ENCODE measurements at regions of chr4 and their contacts with region 1.

Region 1: DNA sequence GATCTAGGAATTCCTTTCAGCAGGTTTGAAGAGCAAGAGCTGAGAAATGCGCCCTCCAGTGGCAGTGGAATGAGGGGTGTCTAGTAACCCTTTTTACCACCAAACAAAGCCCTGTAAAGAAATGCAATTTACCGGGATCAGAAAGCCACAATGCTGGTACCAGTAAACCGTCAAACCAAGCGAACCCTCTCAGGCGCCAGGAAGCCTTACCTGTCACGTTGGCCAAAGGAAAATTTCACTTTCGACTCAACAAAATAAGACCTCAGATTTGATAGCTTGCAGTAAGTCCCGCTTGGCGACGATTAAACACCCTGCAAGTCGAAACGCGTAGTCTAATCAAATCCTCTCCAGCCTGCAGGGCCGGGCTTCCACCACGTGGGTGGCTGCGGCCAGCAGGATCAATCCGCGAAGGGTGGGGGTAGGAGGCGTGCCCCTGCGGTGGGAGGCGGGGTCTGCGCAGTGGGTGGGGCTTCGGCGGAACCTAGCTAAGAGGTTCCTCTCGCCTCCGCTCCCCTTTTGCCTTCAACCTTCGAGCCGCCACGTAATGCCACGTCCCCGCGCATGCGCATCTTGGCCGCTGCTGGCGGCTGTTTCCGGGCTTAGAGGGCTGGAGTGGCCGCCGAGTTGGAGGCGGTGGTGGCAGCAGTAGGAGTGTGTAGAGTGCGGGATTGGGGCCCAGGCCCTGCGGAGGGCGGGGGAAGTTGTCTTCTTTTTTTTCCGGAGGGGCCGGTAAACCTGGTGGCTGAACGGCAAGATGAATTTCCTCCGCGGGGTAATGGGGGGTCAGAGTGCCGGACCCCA is at the start of gene USO1:
- DNase-seq: peak; percentile 97 to 100 (median 99)
- ATAC-seq: peak; percentile 90 to 97 (median 94)
- H3K4me3 ChIP-seq: peak within 1 kb of the TSS; percentile 99 to 100
- H3K4me3 Mint-ChIP-seq: peak within 1 kb of the TSS; percentile 99 to 100 (median 99)
- H3K27ac ChIP-seq: peak within 1 kb of the TSS; percentile 94
- H3K27ac Mint-ChIP-seq: peak within 1 kb of the TSS; percentile 95 to 99
- H3K4me1 ChIP-seq: peaks cover 14 to 25% of the 10 kb centered on the region in 2 experiments
- H3K4me1 Mint-ChIP-seq: peaks cover 61 to 63% (median 62%) of the 10 kb centered on the region in 3 donors
- H3K27me3 ChIP-seq: no peaks in the 10 kb centered on the region
- H3K27me3 Mint-ChIP-seq: no peaks in the 10 kb centered on the region
- total RNA-seq, gene USO1: 24.9 to 40.5 (median 34.6) TPM

Region 2: DNA sequence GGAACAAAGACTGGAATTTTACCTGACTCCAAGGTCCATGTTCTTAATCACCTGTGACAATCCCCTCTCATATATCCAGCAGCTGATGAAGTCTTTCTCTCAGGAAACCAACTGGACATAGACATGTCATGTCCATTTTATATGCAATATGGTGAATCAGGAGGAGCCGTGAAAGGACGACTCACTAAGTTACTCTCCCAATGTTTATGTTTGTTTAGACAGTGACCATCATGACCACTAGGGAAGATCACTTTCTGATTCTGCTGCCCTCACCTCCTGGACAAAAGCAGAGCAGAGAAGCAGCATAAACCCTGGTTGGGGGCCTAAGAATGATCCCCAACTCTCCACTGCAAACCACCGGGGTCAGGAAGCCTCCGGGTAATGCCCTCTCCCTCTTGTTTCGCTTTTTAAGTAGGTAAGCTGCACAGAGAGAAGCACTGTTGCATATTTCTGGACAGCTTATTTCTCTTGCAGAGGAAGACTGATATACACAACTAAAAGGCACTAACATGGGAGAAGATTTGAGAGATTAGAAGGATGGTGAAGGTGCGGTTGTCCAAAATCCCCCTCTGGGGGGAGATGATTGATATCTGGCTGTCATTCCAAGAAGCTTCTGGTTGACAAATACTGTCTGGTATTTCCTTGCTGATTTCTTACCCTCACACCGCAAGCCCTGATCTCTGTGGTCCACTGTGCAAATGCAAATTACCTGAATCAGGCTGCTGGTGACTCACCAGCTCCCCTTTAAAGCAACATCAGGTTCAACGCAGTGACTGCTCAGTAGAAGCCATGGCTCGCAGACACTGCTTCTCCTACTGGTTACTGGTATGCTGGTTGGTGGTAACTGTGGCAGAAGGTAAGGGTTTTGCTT is 168.7 kb before region 1 on chr4 and contains the start of gene ODAPH:
- CTCF ChIA-PET with region 1: no interaction called
- POLR2A ChIA-PET with region 1: interaction called in 1 of 2 experiments, 19 read pairs
- DNase-seq: peak in 3 of 35 experiments; percentile 3 to 8 (median 4)
- ATAC-seq: peak in 3 of 4 experiments; percentile 58 to 84 (median 70)
- H3K4me3 ChIP-seq: no peak within 1 kb of the TSS
- H3K4me3 Mint-ChIP-seq: no peak within 1 kb of the TSS
- H3K27ac ChIP-seq: no peak within 1 kb of the TSS
- H3K27ac Mint-ChIP-seq: peak within 1 kb of the TSS in 1 of 2 donors; percentile 34
- H3K4me1 ChIP-seq: no peaks in the 10 kb centered on the region
- H3K4me1 Mint-ChIP-seq: peaks cover 0 to 5% (median 0%) of the 10 kb centered on the region in 3 donors
- H3K27me3 ChIP-seq: peaks cover 0 to 3% of the 10 kb centered on the region in 2 experiments
- H3K27me3 Mint-ChIP-seq: peaks cover 13% of the 10 kb centered on the region in 2 donors
- total RNA-seq, gene ODAPH: 0.47 TPM in 1 of 5 donors, not detected in the others

Region 3: DNA sequence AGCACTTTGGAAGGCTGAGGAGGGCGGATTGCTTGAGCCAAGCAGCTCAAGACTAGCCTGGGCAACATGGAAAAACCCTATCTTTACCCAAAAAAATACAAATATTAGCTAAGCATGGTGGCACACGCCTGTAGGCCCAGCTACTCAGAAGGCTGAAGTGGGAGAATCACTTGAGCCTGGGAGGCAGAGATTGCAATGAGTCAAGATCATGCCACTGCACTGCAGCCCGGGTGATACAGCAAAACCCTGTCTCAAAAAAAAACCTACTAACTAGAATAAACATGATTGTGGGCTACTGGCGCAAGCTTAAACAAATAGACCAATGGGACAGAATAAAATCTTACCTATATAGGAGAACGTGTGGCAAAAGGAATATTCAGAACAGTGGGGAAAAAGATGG is 101.2 kb before region 1 on chr4:
- CTCF ChIA-PET with region 1: no interaction called
- POLR2A ChIA-PET with region 1: no interaction called
- DNase-seq: no peak
- ATAC-seq: no peak
- H3K4me3 ChIP-seq: no peak overlapping the region
- H3K4me3 Mint-ChIP-seq: no peak overlapping the region
- H3K27ac ChIP-seq: no peak overlapping the region
- H3K27ac Mint-ChIP-seq: no peak overlapping the region
- H3K4me1 ChIP-seq: no peaks in the 10 kb centered on the region
- H3K4me1 Mint-ChIP-seq: no peaks in the 10 kb centered on the region
- H3K27me3 ChIP-seq: no peaks in the 10 kb centered on the region
- H3K27me3 Mint-ChIP-seq: no peaks in the 10 kb centered on the region

Region 4: GRCh38 chr4:75666299-75666698 is 58.0 kb before region 1 on chr4:
- CTCF ChIA-PET with region 1: interaction called, 10 to 17 read pairs
- POLR2A ChIA-PET with region 1: interaction called, 4 to 25 read pairs
- DNase-seq: no peak
- ATAC-seq: peak in 2 of 4 experiments; percentile 20 to 39
- H3K4me3 ChIP-seq: no peak overlapping the region
- H3K4me3 Mint-ChIP-seq: peak overlapping the region; percentile 62 to 100 (median 70)
- H3K27ac ChIP-seq: no peak overlapping the region
- H3K27ac Mint-ChIP-seq: peak overlapping the region; percentile 23 to 52
- H3K4me1 ChIP-seq: peaks cover 34 to 36% of the 10 kb centered on the region in 2 experiments
- H3K4me1 Mint-ChIP-seq: peaks cover 81 to 85% (median 84%) of the 10 kb centered on the region in 3 donors
- H3K27me3 ChIP-seq: no peaks in the 10 kb centered on the region
- H3K27me3 Mint-ChIP-seq: no peaks in the 10 kb centered on the region

Region 5: GRCh38 chr4:75708218-75708691 is 16.0 kb before region 1 on chr4:
- CTCF ChIA-PET with region 1: interaction called, 8 to 19 read pairs
- POLR2A ChIA-PET with region 1: interaction called, 4 to 12 read pairs
- DNase-seq: peak in 33 of 35 experiments; percentile 14 to 75 (median 44)
- ATAC-seq: peak; percentile 66 to 94 (median 74)
- H3K4me3 ChIP-seq: no peak overlapping the region
- H3K4me3 Mint-ChIP-seq: no peak overlapping the region
- H3K27ac ChIP-seq: no peak overlapping the region
- H3K27ac Mint-ChIP-seq: no peak overlapping the region
- H3K4me1 ChIP-seq: peaks cover 0 to 3% of the 10 kb centered on the region in 2 experiments
- H3K4me1 Mint-ChIP-seq: peaks cover 5 to 7% (median 6%) of the 10 kb centered on the region in 3 donors
- H3K27me3 ChIP-seq: no peaks in the 10 kb centered on the region
- H3K27me3 Mint-ChIP-seq: no peaks in the 10 kb centered on the region

Measured in T-cell (primary cell).